WTC11 (cell line): ENCODE measurements at regions of chr2 and their contacts with region 1.

Region 1: GRCh38 chr2:9142551-9143263 is 63.9 kb upstream of the ASAP2 start:
- DNase-seq: peak; percentile 90
- ATAC-seq: peak; percentile 92
- H3K4me3 Mint-ChIP-seq: peak overlapping the region; percentile 53
- H3K27ac Mint-ChIP-seq: no peak overlapping the region
- H3K4me1 Mint-ChIP-seq: peaks cover 16% of the 10 kb centered on the region
- H3K27me3 Mint-ChIP-seq: peaks cover 64% of the 10 kb centered on the region
- CTCF ChIP-seq: peak; percentile 94

Region 2: GRCh38 chr2:8380026-8380425 is 762.7 kb before region 1 on chr2:
- CTCF ChIA-PET with region 1: no interaction called
- POLR2A ChIA-PET with region 1: no interaction called
- DNase-seq: no peak
- ATAC-seq: no peak
- H3K4me3 Mint-ChIP-seq: no peak overlapping the region
- H3K27ac Mint-ChIP-seq: no peak overlapping the region
- H3K4me1 Mint-ChIP-seq: peaks cover 17% of the 10 kb centered on the region
- H3K27me3 Mint-ChIP-seq: no peaks in the 10 kb centered on the region
- CTCF ChIP-seq: no peak

Region 3: GRCh38 chr2:8882094-8882493 is 260.6 kb before region 1 on chr2:
- CTCF ChIA-PET with region 1: interaction called, 22 read pairs
- POLR2A ChIA-PET with region 1: no interaction called
- DNase-seq: peak; percentile 76
- ATAC-seq: peak; percentile 97
- H3K4me3 Mint-ChIP-seq: no peak overlapping the region
- H3K27ac Mint-ChIP-seq: no peak overlapping the region
- H3K4me1 Mint-ChIP-seq: peaks cover 14% of the 10 kb centered on the region
- H3K27me3 Mint-ChIP-seq: no peaks in the 10 kb centered on the region
- CTCF ChIP-seq: peak; percentile 53

Region 4: GRCh38 chr2:9010866-9011265 is 131.8 kb before region 1 on chr2:
- CTCF ChIA-PET with region 1: no interaction called
- POLR2A ChIA-PET with region 1: no interaction called
- DNase-seq: no peak
- ATAC-seq: no peak
- H3K4me3 Mint-ChIP-seq: no peak overlapping the region
- H3K27ac Mint-ChIP-seq: no peak overlapping the region
- H3K4me1 Mint-ChIP-seq: no peaks in the 10 kb centered on the region
- H3K27me3 Mint-ChIP-seq: no peaks in the 10 kb centered on the region
- CTCF ChIP-seq: no peak

Region 5: GRCh38 chr2:9112079-9112721 is 30.5 kb before region 1 on chr2:
- CTCF ChIA-PET with region 1: interaction called, 46 read pairs
- POLR2A ChIA-PET with region 1: no interaction called
- DNase-seq: no peak
- ATAC-seq: no peak
- H3K4me3 Mint-ChIP-seq: no peak overlapping the region
- H3K27ac Mint-ChIP-seq: no peak overlapping the region
- H3K4me1 Mint-ChIP-seq: peaks cover 19% of the 10 kb centered on the region
- H3K27me3 Mint-ChIP-seq: no peaks in the 10 kb centered on the region
- CTCF ChIP-seq: no peak

Region 6: GRCh38 chr2:9205963-9206948 is 63.5 kb after region 1 on chr2 and contains the start of gene ASAP2:
- CTCF ChIA-PET with region 1: interaction called, 22 read pairs
- POLR2A ChIA-PET with region 1: no interaction called
- DNase-seq: peak; percentile 62
- ATAC-seq: peak; percentile 70
- H3K4me3 Mint-ChIP-seq: peak within 1 kb of the TSS; percentile 80
- H3K27ac Mint-ChIP-seq: 0 out of 2 replicates have a peak within 1 kb of the TSS, but pooled peaks have one; percentile 70
- H3K4me1 Mint-ChIP-seq: peaks cover 31% of the 10 kb centered on the region
- H3K27me3 Mint-ChIP-seq: peaks cover 26% of the 10 kb centered on the region
- CTCF ChIP-seq: peak; percentile 49
- total RNA-seq, gene ASAP2: 14.3 to 15.6 TPM (median 14.5 TPM) in 3 replicates

Region 7: GRCh38 chr2:9370746-9371145 is 228.0 kb after region 1 on chr2:
- CTCF ChIA-PET with region 1: interaction called, 39 read pairs
- POLR2A ChIA-PET with region 1: no interaction called
- DNase-seq: no peak
- ATAC-seq: no peak
- H3K4me3 Mint-ChIP-seq: no peak overlapping the region
- H3K27ac Mint-ChIP-seq: no peak overlapping the region
- H3K4me1 Mint-ChIP-seq: peaks cover 4% of the 10 kb centered on the region; the same call in 1 of the 2 replicates
- H3K27me3 Mint-ChIP-seq: no peaks in the 10 kb centered on the region
- CTCF ChIP-seq: no peak

Region 8: DNA sequence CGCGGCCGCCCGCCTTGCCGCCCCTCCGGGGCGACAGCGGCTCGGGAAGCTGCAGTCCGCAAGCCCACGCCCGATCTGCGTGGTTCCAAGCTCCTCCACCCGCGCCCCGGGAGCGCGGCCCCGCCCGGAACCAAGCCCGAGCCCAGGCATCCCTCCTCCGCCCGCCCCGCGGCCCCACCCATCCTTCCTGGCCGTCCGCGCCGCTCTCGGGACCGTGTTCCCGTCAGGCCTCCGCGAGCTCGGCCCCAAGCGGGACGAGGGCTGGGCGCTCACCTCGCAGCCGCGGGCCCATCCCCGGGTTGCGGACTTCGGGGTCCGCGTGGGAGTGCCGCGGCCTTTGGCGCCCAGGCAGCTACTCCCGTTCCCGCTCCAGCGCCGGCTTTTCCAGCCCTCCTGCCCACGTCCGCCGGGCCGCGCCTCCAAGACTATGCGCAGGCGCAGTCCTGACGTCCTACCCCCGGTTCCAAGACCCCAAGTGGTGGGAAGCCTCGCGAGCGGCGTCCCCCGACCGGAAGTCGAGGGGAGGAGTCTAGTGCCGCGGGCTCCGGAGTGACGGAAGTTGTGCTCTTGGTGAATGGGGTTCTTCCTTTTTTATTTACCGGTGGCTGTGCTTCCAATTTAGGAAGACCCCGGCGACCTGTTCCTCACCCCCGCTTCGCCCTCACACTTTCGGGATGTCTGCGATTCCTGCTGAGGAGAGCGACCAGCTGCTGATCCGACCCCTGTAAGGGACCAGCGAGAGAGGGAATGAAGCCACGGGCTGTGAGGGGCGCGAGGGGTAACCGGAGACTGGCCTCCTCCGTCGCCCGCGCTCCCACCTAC is 280.6 kb after region 1 on chr2 and contains the starts of genes CPSF3 and ITGB1BP1:
- CTCF ChIA-PET with region 1: interaction called, 16 read pairs
- POLR2A ChIA-PET with region 1: interaction called, 3 read pairs
- DNase-seq: peak; percentile 98
- ATAC-seq: peak; percentile 91
- H3K4me3 Mint-ChIP-seq: peak within 1 kb of the TSS; percentile 91; the same call in 1 of the 2 replicates
- H3K27ac Mint-ChIP-seq: peak within 1 kb of the TSS; percentile 95
- H3K4me1 Mint-ChIP-seq: peaks cover 9% of the 10 kb centered on the region
- H3K27me3 Mint-ChIP-seq: peaks cover 11% of the 10 kb centered on the region; the same call in 1 of the 2 replicates
- CTCF ChIP-seq: no peak
- total RNA-seq, gene CPSF3: 83.7 to 88.4 TPM (median 84.2 TPM) in 3 replicates
- total RNA-seq, gene ITGB1BP1: 32.7 to 44.0 TPM (median 33.8 TPM) in 3 replicates

Region 9: GRCh38 chr2:9857814-9858729 is 715.4 kb after region 1 on chr2:
- CTCF ChIA-PET with region 1: no interaction called
- POLR2A ChIA-PET with region 1: no interaction called
- DNase-seq: no peak
- ATAC-seq: no peak
- H3K4me3 Mint-ChIP-seq: no peak overlapping the region
- H3K27ac Mint-ChIP-seq: no peak overlapping the region
- H3K4me1 Mint-ChIP-seq: no peaks in the 10 kb centered on the region
- H3K27me3 Mint-ChIP-seq: peaks cover 30% of the 10 kb centered on the region
- CTCF ChIP-seq: no peak